B cell (primary cell): ENCODE measurements at regions of chr14 and their contacts with region 1.

Region 1: DNA sequence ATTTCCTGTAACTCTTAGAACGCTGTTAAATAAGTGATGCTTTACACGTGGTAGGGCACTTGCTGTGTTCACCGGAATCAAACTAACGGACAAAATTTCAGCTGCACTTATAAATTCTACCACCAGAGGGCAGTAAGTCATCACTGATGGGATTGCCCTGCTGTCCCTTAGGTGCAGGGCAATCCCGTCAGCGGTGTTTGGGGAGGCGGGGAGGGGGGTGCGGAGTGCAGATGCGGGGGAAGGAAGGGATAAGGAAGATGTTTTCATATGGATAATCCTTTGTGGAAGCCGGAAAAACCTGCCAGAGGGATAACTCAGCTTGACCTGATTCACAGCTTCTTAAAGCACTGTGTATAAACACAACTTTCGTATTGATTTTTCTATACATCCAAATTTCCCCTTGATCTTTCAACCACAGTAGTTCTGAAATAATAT is 21.7 kb upstream of the SLC10A1 start:
- DNase-seq: peak; percentile 80
- ATAC-seq: peak; percentile 70
- H3K4me3 ChIP-seq: no peak overlapping the region
- H3K4me3 Mint-ChIP-seq: no peak overlapping the region
- H3K27ac ChIP-seq: no peak overlapping the region
- H3K27ac Mint-ChIP-seq: no peak overlapping the region
- H3K4me1 ChIP-seq: peaks cover 0 to 5% of the 10 kb centered on the region in 2 donors
- H3K4me1 Mint-ChIP-seq: peaks cover 7% of the 10 kb centered on the region
- H3K27me3 ChIP-seq: peaks cover 0 to 4% (median 0%) of the 10 kb centered on the region in 4 experiments
- H3K27me3 Mint-ChIP-seq: peaks cover 19% of the 10 kb centered on the region
- CTCF ChIP-seq: peak; percentile 86

Region 2: GRCh38 chr14:69887740-69888657 is 69.2 kb after region 1 on chr14:
- CTCF ChIA-PET with region 1: no interaction called
- POLR2A ChIA-PET with region 1: no interaction called
- intact Hi-C with region 1: no loop called
- DNase-seq: no peak
- ATAC-seq: no peak
- H3K4me3 ChIP-seq: no peak overlapping the region
- H3K4me3 Mint-ChIP-seq: no peak overlapping the region
- H3K27ac ChIP-seq: no peak overlapping the region
- H3K27ac Mint-ChIP-seq: no peak overlapping the region
- H3K4me1 ChIP-seq: no peaks in the 10 kb centered on the region
- H3K4me1 Mint-ChIP-seq: no peaks in the 10 kb centered on the region
- H3K27me3 ChIP-seq: no peaks in the 10 kb centered on the region
- H3K27me3 Mint-ChIP-seq: peaks cover 31% of the 10 kb centered on the region
- CTCF ChIP-seq: no peak

Region 3: GRCh38 chr14:70027785-70028428 is 209.1 kb after region 1 on chr14:
- CTCF ChIA-PET with region 1: interaction called, 33 read pairs
- POLR2A ChIA-PET with region 1: no interaction called
- intact Hi-C with region 1: no loop called
- DNase-seq: peak; percentile 56
- ATAC-seq: peak; percentile 51
- H3K4me3 ChIP-seq: no peak overlapping the region
- H3K4me3 Mint-ChIP-seq: no peak overlapping the region
- H3K27ac ChIP-seq: no peak overlapping the region
- H3K27ac Mint-ChIP-seq: no peak overlapping the region
- H3K4me1 ChIP-seq: no peaks in the 10 kb centered on the region
- H3K4me1 Mint-ChIP-seq: no peaks in the 10 kb centered on the region
- H3K27me3 ChIP-seq: peaks cover 0 to 6% (median 0%) of the 10 kb centered on the region in 4 experiments
- H3K27me3 Mint-ChIP-seq: peaks cover 6% of the 10 kb centered on the region
- CTCF ChIP-seq: peak; percentile 77